ENCODE measurements at regions of chr5 and their contacts with region 1.

Region 1: DNA sequence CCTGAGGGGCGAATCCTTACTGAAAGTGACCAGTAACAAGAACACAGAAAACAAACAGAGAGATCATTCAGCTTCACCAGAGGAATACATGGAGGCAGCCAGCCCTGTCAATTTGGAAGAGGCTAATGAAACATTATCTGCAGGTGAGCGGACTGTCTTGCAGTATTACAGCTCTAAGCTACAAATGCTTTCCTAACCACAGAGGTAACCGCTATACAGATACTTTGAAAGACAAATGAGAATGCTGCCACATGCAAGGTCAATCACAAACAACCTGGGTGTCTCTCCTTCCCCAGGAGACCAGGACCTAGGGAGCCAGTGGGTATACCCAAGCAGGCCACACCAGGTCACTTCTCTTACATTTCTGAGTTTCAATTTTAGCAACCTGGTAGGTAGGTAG is 30.2 kb downstream of the EFNA5 start:
- DNase-seq: no peak
- H3K4me3 ChIP-seq: no peak overlapping the region
- H3K27ac ChIP-seq: no peak overlapping the region
- H3K4me1 ChIP-seq: peaks cover 16% of the 10 kb centered on the region
- H3K27me3 ChIP-seq: no peaks in the 10 kb centered on the region
- CTCF ChIP-seq: no peak

Region 2: GRCh38 chr5:107605596-107606125 is 34.9 kb before region 1 on chr5:
- CTCF ChIA-PET with region 1: interaction called, 11 read pairs
- POLR2A ChIA-PET with region 1: no interaction called
- intact Hi-C with region 1: no loop called
- DNase-seq: no peak
- H3K4me3 ChIP-seq: no peak overlapping the region
- H3K27ac ChIP-seq: no peak overlapping the region
- H3K4me1 ChIP-seq: no peaks in the 10 kb centered on the region
- H3K27me3 ChIP-seq: no peaks in the 10 kb centered on the region
- CTCF ChIP-seq: no peak

Region 3: GRCh38 chr5:107705402-107706014 is 64.9 kb after region 1 on chr5:
- CTCF ChIA-PET with region 1: no interaction called
- POLR2A ChIA-PET with region 1: interaction called, 13 read pairs
- intact Hi-C with region 1: no loop called
- DNase-seq: no peak
- H3K4me3 ChIP-seq: no peak overlapping the region
- H3K27ac ChIP-seq: no peak overlapping the region
- H3K4me1 ChIP-seq: no peaks in the 10 kb centered on the region
- H3K27me3 ChIP-seq: peaks cover 5% of the 10 kb centered on the region
- CTCF ChIP-seq: no peak